HepG2 (cell line): ENCODE measurements at regions of chr9 and their contacts with region 1.

Region 1: DNA sequence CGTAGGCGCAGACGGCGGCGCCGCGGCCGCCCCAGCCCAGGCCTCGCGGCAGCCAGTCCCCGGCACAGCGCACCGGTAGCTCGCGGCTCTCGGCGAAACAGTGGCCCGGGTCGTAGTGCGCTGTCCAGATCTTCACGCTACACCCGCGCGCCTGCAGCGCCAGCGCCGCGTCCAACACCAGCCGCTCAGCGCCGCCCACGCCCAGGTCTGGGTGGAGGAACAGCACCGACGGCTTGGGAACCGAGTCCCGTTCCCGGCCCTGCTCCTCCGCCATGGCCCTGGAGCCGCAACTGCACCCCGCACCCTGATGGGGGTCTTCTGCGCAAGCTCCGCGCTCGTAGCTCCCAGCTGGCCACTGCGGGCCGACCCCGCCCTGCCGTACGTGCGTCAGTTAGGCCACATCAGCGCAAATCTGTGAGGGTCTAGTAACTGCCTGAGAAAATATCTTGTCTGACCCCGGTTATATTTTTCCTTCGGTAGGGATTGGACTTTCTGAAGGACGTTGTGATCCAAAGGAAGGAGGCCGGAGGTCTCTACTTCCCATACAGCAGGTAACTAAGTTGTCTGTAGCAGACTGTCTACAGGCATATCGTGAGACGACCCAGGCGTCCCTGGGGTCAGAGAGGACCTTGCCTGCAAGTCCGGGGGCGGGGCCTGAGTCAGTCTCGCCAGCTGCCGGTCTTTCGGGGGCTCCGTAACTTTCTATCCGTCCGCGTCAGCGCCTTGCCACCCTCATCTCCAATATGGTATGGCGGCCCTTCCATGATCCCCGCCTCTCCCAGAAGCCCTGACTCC is at the starts of genes ALG2 and SEC61B:
- DNase-seq: peak; percentile 90
- ATAC-seq: peak; percentile 96
- H3K4me3 ChIP-seq: peak within 1 kb of the TSS; percentile 89 to 97 (median 94)
- H3K27ac ChIP-seq: peak within 1 kb of the TSS; percentile 99
- H3K4me1 ChIP-seq: peaks cover 56% of the 10 kb centered on the region
- H3K27me3 ChIP-seq: no peaks in the 10 kb centered on the region; a peak in 1 of 5 replicates
- CTCF ChIP-seq: no peak
- EP300 ChIP-seq: 0 out of 4 replicates have a peak, but pooled peaks of 1 of the 2 experiments have one; percentile 19
- POLR2A ChIP-seq: peak; percentile 96
- RAD21 ChIP-seq: no peak; the same call in 1 of the 2 replicates
- total RNA-seq, gene ALG2: 29.2 and 46.2 TPM in 2 replicates
- total RNA-seq, gene SEC61B: 368 and 479 TPM in 2 replicates

Region 2: DNA sequence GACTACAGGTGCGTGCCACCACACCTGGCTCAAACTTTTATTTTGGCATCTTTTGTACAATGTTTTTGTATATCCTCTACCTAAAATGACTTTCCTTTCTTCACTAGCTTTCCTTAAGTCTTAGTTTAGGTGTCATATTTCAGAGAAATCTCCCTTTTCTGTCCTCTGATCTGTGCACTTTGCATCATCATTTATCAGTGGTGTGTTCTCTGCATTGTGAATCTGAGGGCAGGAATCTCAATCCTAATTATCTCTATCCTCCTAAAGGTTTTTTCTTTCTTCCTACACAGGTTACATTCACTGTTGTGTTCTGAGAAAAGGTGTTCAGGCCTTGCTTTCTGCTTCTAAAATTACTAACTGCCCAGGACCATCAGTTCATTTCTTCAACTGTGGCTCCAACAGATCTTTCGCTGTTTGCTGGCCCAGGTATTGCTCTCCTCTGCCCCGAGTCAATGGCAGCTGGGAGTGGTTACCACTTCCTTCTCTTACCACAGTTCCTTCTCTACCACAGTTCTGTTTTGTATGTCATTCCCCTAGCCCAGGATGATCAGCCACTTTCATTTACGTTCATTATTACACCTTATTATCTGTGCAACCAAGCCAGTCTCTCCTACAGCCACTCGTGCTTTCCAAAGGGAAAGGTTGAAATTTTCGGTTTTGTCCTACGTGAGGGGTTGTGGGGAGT is 102.9 kb before region 1 on chr9:
- CTCF ChIA-PET with region 1: no interaction called
- POLR2A ChIA-PET with region 1: no interaction called
- in situ Hi-C with region 1: no loop called
- intact Hi-C with region 1: no loop called
- DNase-seq: no peak
- ATAC-seq: no peak
- H3K4me3 ChIP-seq: no peak overlapping the region
- H3K27ac ChIP-seq: no peak overlapping the region
- H3K4me1 ChIP-seq: no peaks in the 10 kb centered on the region
- H3K27me3 ChIP-seq: no peaks in the 10 kb centered on the region
- CTCF ChIP-seq: no peak
- EP300 ChIP-seq: no peak
- POLR2A ChIP-seq: no peak
- RAD21 ChIP-seq: no peak

Region 3: DNA sequence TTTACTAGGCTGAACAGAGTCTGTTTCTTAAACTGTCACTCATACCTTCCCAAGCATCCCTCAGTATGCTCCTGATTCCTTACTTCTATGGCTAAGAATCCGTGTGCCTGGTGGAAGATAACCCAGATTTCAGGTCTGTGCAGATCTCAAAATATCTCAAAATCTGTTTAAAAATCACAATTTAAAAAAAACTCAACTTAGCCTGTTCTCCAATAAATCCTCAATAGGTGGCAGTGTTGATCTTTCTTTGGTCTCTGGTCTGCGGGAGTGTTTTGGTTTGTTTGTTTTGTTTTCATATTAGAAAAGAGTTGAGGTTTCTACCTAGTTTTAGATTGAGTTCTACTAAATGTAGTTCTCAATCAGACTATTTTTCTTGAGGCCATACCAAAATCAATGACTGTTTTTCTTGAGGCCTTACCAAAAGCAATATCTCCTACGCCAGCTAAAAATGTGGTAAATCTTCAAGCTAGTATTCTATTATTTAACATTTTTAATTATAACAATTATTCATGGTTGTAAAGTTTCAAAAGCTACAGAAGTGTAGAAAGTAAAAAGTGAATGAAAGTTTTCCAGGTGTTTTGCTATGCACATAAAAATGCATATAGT is 59.0 kb before region 1 on chr9:
- CTCF ChIA-PET with region 1: no interaction called
- POLR2A ChIA-PET with region 1: no interaction called
- in situ Hi-C with region 1: no loop called
- intact Hi-C with region 1: no loop called
- DNase-seq: peak; percentile 43
- ATAC-seq: peak; percentile 25; the same call in 1 of the 3 replicates
- H3K4me3 ChIP-seq: no peak overlapping the region
- H3K27ac ChIP-seq: no peak overlapping the region
- H3K4me1 ChIP-seq: peaks cover 11% of the 10 kb centered on the region
- H3K27me3 ChIP-seq: no peaks in the 10 kb centered on the region; a peak in 1 of 5 replicates
- CTCF ChIP-seq: peak; percentile 75
- EP300 ChIP-seq: no peak
- POLR2A ChIP-seq: no peak
- RAD21 ChIP-seq: peak; percentile 63

Region 4: GRCh38 chr9:99173570-99174504 is 48.0 kb before region 1 on chr9:
- CTCF ChIA-PET with region 1: no interaction called
- POLR2A ChIA-PET with region 1: interaction called, 21 read pairs
- in situ Hi-C with region 1: no loop called
- intact Hi-C with region 1: loop called (anchors 1 kb)
- DNase-seq: peak; percentile 87
- ATAC-seq: peak; percentile 76
- H3K4me3 ChIP-seq: peak overlapping the region in 2 of 3 experiments; percentile 9 to 24; a peak in 2 of 6 replicates
- H3K27ac ChIP-seq: peak overlapping the region; percentile 22
- H3K4me1 ChIP-seq: peaks cover 85% of the 10 kb centered on the region
- H3K27me3 ChIP-seq: peaks cover 2 to 6% of the 10 kb centered on the region in 2 experiments; a peak in 2 of 5 replicates
- CTCF ChIP-seq: no peak
- EP300 ChIP-seq: 0 out of 4 replicates have a peak, but pooled peaks of 1 of the 2 experiments have one; percentile 31
- POLR2A ChIP-seq: no peak
- RAD21 ChIP-seq: no peak

Region 5: DNA sequence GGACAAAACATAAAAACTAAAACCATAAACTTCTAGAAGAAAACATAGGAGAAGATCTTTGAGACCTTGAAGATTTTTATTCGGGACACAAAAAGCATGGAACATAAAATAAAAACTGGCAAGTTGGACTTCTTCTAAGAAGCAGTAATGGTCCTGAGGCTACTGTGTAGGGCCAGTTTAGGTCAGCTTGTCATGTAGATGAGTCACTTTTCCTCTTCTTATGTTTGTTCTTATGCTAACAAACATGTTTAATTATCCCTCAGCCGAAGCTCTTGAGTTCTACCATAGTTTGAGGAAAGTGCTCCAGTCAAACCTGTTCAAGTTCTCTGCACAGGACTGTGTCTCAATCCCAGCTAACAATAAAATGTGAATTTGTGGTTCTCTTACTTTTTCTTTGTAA is 318.1 kb after region 1 on chr9:
- CTCF ChIA-PET with region 1: no interaction called
- POLR2A ChIA-PET with region 1: no interaction called
- in situ Hi-C with region 1: no loop called
- intact Hi-C with region 1: no loop called
- DNase-seq: no peak
- ATAC-seq: no peak
- H3K4me3 ChIP-seq: no peak overlapping the region
- H3K27ac ChIP-seq: no peak overlapping the region
- H3K4me1 ChIP-seq: no peaks in the 10 kb centered on the region
- H3K27me3 ChIP-seq: peaks cover 0 to 5% of the 10 kb centered on the region in 2 experiments; a peak in 1 of 5 replicates
- CTCF ChIP-seq: no peak
- EP300 ChIP-seq: no peak
- POLR2A ChIP-seq: no peak
- RAD21 ChIP-seq: no peak